Breast epithelium (tissue), 4 donors: ENCODE measurements at regions of chr5 and their contacts with region 1.

Region 1: DNA sequence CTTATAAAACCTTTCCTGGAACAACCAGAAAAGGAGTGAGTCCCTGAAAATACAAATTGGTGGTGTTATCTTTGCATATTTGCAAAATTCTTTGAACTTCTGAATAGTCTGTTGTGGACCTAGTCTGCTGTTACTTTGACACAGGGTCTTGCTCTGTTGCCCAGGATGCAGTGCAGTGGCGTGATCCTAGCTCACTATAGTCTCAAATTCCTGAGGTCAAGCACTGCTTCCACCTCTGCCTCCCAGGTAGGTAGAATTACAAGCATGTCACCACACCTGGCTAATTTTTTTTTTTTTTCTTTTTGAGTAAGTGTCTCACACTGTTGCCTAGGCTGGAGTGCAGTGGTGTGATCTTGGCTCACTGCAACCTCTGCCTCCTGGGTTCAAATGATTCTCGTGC is 43.7 kb upstream of the SPRY4 start:
- DNase-seq: no peak
- H3K4me3 ChIP-seq: no peak overlapping the region
- H3K27ac ChIP-seq: no peak overlapping the region
- H3K4me1 ChIP-seq: no peaks in the 10 kb centered on the region
- H3K27me3 ChIP-seq: no peaks in the 10 kb centered on the region
- CTCF ChIP-seq: no peak
- POLR2A ChIP-seq: no peak

Region 2: DNA sequence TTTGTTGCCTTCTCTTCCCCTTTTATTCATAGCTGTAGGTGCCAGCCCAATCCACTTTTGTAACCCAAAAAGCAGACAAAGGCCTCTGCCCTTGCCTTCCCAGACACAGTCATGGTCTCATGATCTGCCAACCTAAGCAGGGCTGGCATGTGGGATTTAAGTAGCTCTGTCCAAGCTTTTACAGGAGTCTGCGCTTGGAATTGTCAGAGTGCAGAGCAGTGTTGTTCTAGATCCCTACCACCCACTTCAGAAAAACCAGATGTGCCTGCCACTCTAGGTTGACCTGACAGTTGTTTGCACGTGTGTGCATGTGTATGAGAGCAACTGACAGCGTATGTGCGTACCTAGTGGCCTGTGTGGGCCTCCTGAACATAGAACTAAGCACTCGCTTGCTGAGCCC is 44.1 kb after region 1 on chr5:
- intact Hi-C with region 1: loop called (anchors 1 kb)
- DNase-seq: no peak
- H3K4me3 ChIP-seq: no peak overlapping the region
- H3K27ac ChIP-seq: no peak overlapping the region
- H3K4me1 ChIP-seq: no peaks in the 10 kb centered on the region
- H3K27me3 ChIP-seq: no peaks in the 10 kb centered on the region
- CTCF ChIP-seq: no peak
- POLR2A ChIP-seq: no peak

Region 3: GRCh38 chr5:142548739-142549275 is 180.3 kb after region 1 on chr5:
- intact Hi-C with region 1: no loop called
- DNase-seq: peak in 1 of 2 donors; percentile 61
- H3K4me3 ChIP-seq: no peak overlapping the region
- H3K27ac ChIP-seq: no peak overlapping the region
- H3K4me1 ChIP-seq: peaks cover 0 to 5% of the 10 kb centered on the region in 2 donors
- H3K27me3 ChIP-seq: no peaks in the 10 kb centered on the region
- CTCF ChIP-seq: peak; percentile 39 to 89 (median 76)
- POLR2A ChIP-seq: no peak